H1 (cell line): ENCODE measurements at regions of chr12 and their contacts with region 1.

Region 1: GRCh38 chr12:2640705-2641104 is 154.1 kb upstream of the FKBP4 start:
- DNase-seq: no peak
- H3K4me3 ChIP-seq: peak overlapping the region in 1 of 4 experiments; percentile 11; a peak in 1 of 8 replicates
- H3K27ac ChIP-seq: no peak overlapping the region
- H3K4me1 ChIP-seq: peaks cover 5 to 10% (median 7%) of the 10 kb centered on the region in 4 experiments
- H3K27me3 ChIP-seq: no peaks in the 10 kb centered on the region
- CTCF ChIP-seq: no peak
- EP300 ChIP-seq: no peak
- POLR2A ChIP-seq: no peak
- RAD21 ChIP-seq: no peak

Region 2: GRCh38 chr12:2652401-2653081 is 11.8 kb after region 1 on chr12:
- CTCF ChIA-PET with region 1: interaction called, 23 read pairs
- POLR2A ChIA-PET with region 1: interaction called, 4 read pairs
- DNase-seq: peak in 1 of 2 experiments; percentile 69
- H3K4me3 ChIP-seq: no peak overlapping the region
- H3K27ac ChIP-seq: no peak overlapping the region
- H3K4me1 ChIP-seq: peaks cover 0 to 5% (median 0%) of the 10 kb centered on the region in 4 experiments; a peak in 1 of 7 replicates
- H3K27me3 ChIP-seq: no peaks in the 10 kb centered on the region
- CTCF ChIP-seq: peak; percentile 59 to 76 (median 66)
- EP300 ChIP-seq: no peak
- POLR2A ChIP-seq: no peak
- RAD21 ChIP-seq: peak; percentile 62 to 77